Sigmoid colon (tissue), 7 donors: ENCODE measurements at regions of chrX and their contacts with region 1.

Region 1: DNA sequence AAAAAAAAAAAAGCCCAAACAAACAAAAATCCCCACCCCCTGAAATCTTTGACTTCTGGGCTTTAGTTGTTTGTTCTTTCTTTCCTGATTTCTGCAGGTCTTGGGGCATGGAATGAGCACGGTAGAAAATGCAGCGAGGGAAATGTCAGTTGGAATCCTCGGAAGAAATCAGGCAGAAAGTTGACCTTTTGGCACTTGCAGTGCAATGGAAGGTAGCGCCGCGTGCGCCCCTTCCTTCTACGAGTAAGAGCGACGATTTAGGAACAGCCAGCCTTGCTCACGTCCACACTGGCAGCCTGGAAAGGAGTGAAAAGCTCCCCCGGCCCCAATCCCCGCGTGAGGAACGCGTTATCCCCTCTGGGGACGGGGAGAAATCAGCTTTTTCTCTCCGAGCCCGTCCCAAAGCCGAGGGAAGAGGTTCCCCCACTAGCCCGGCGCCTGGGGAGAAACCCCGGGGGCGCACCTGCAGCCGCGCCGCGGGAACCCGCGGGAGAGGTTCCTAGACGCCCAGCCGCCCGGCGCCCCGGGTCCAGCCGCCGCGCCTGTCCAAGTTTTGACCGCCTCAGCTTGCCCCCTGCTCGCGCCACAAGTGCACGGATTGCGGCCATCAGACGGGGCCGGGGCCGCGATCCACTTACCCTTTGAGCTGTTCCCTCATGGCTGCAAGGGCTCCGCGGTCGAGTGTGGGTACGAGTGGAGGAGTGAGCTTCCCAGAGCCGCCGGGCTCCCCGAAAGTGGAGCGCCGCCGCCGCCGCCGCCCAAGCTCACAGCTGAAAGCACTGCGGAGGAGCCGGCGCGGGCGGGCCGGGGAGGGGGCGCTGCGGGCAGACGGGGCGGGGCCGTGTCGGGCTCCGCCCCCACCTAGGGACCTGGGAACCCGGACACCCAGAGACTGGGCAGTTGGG is 194.6 kb upstream of the FTHL17 start:
- DNase-seq: peak; percentile 75
- H3K4me3 ChIP-seq: peak overlapping the region; percentile 49 to 67 (median 67)
- H3K27ac ChIP-seq: peak overlapping the region; percentile 63 to 75 (median 72)
- H3K4me1 ChIP-seq: peaks cover 0 to 7% (median 0%) of the 10 kb centered on the region in 4 donors
- H3K27me3 ChIP-seq: no peaks in the 10 kb centered on the region
- CTCF ChIP-seq: no peak
- EP300 ChIP-seq: no peak
- POLR2A ChIP-seq: no peak

Region 2: DNA sequence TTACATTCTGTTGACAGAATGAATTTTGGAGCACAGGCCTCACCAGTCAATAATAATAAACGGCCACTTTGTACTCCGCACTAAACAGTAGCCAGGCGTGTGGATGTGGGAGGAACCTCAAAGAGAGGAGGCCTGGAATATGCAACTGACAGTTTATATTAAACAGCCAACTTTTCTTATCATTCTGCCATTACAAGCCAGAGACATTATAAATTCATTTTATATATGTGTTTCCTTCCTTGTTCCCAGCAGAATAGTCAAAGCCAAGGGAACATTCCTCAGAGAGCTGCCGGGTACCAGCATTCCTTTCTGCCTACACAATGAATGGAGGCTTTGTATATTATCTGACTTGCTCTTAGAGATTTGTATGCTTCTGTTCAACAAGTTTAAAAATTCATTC is 241.9 kb after region 1 on chrX:
- intact Hi-C with region 1: loop called (anchors 10 kb)
- DNase-seq: peak; percentile 64
- H3K4me3 ChIP-seq: peak overlapping the region in 1 of 4 donors; percentile 5
- H3K27ac ChIP-seq: peak overlapping the region in 3 of 4 donors; percentile 18 to 65 (median 64)
- H3K4me1 ChIP-seq: peaks cover 0 to 16% (median 6%) of the 10 kb centered on the region in 4 donors
- H3K27me3 ChIP-seq: no peaks in the 10 kb centered on the region
- CTCF ChIP-seq: no peak
- EP300 ChIP-seq: peak in 2 of 4 donors; percentile 15 to 77
- POLR2A ChIP-seq: no peak